ENCODE measurements at regions of chr3 and their contacts with region 1.

Region 1: DNA sequence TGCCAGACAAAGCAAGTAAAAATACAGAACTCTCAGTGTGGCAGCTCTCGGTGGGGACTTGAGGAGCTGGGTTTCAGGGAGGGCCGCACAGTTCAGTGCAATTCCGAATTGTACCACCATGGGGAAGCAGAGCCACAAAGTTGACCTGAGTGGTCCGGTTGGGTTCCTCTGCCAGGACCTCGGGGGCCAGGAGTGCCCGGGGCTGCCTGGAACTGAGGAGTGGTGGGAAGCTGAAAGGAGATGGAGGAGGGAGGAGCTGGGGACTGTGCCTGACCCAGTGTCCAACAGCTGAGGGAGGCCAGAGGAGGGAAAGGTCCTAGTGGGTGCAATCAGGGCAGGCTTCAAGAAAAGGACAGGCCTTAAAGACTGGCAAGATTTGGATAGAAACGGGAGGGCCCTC is 32.2 kb upstream of the TRH start:
- DNase-seq: no peak
- H3K4me3 ChIP-seq: no peak overlapping the region
- H3K27me3 ChIP-seq: peaks cover 3% of the 10 kb centered on the region
- CTCF ChIP-seq: peak; percentile 80

Region 2: DNA sequence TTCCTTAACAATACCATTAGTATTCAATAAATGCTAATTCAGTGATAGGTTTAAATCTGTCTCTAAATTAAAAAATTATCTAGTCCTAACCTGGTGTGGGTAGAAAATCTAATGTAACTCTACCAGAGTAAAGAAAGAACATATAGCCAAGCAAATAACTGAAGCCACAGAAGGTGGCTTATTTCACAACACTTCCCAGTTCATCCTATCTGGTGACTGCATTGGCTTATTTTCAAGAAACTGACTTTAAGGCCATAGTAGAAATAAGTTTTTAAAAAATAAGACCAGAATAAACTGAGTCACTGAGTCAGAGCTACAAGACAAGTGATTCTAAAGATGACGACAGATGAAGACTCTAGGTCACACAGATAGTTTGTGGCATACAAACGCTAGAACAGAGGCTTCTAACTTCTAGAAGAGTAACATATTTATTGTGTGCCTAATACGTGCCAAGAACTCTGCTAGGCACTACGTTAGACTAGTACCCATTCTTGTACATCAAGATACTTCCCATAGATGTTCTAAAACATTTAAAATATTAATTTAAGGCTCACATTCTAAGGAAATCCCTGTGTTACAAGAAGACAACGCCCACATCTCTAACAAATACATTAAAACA is 74.7 kb before region 1 on chr3:
- CTCF ChIA-PET with region 1: no interaction called
- POLR2A ChIA-PET with region 1: no interaction called
- DNase-seq: no peak
- H3K4me3 ChIP-seq: no peak overlapping the region
- H3K27me3 ChIP-seq: no peaks in the 10 kb centered on the region
- CTCF ChIP-seq: no peak

Region 3: GRCh38 chr3:129927072-129927471 is 15.2 kb before region 1 on chr3:
- CTCF ChIA-PET with region 1: interaction called, 24 read pairs
- POLR2A ChIA-PET with region 1: no interaction called
- DNase-seq: no peak
- H3K4me3 ChIP-seq: no peak overlapping the region
- H3K27me3 ChIP-seq: peaks cover 4% of the 10 kb centered on the region
- CTCF ChIP-seq: no peak

Region 4: DNA sequence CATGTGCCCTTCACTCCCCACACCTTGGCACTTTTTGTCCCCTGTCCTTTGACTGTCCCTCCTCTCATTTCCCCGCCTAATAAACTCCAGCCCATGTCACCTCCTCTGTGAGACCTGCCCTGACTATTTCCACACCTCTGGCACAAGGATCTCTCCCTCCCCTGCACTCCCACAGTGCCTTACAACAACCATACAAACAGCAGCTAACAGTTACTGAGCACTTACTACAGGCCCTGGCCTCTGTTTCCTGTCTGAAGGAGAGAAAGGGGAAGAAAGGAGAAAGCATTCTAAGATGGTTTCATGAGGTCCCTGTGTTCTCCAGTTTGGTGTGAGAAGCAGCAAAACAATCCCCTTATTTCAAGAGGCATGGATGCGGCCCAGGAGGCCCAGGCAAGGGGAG is 12.2 kb after region 1 on chr3:
- CTCF ChIA-PET with region 1: interaction called, 22 read pairs
- POLR2A ChIA-PET with region 1: no interaction called
- DNase-seq: no peak
- H3K4me3 ChIP-seq: no peak overlapping the region
- H3K27me3 ChIP-seq: peaks cover 13% of the 10 kb centered on the region
- CTCF ChIP-seq: no peak

Region 5: DNA sequence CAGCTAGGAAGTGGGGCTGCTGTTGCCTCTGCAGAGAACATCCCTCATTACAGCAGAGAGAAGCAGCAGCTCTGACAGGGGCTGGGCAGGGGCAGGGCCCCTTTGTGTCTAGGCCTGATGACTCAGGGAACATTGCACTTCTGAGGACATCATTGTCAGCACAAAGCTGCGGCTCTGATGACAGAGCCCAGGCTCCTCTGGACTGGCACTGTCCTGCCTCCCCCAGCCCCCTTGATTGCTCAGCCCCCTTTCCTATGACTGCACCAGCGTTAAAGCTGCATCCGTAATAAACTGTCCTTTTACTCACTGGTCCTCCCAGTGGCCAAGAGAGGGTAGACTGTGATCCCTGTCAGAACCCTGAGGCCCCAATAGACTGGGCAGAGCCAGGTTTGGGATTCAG is 50.5 kb after region 1 on chr3:
- CTCF ChIA-PET with region 1: interaction called, 11 read pairs
- POLR2A ChIA-PET with region 1: no interaction called
- DNase-seq: no peak
- H3K4me3 ChIP-seq: no peak overlapping the region
- H3K27me3 ChIP-seq: peaks cover 4% of the 10 kb centered on the region; the same call in 1 of the 2 replicates
- CTCF ChIP-seq: peak; percentile 54

Region 6: DNA sequence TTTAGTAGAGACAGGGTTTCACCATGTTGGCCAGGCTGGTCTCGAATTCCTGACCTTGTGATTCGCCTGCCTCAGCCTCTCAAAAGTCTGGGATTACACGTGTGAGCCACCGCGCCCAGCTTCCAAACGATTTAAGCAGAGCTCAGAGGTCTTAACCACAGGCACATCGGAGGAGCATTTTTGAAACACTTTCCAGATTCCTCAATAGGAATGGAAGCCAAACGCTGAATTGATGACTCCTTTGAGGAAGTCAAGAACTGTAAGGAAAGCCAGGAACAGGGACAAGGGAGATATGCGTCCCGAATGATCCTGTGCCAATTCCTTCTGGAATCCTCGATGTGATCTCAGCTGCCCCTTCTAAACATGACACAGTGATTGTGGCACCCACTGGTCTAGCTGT is 72.2 kb after region 1 on chr3:
- CTCF ChIA-PET with region 1: interaction called, 14 read pairs
- POLR2A ChIA-PET with region 1: no interaction called
- DNase-seq: peak; percentile 17
- H3K4me3 ChIP-seq: no peak overlapping the region
- H3K27me3 ChIP-seq: no peaks in the 10 kb centered on the region
- CTCF ChIP-seq: no peak

Region 7: GRCh38 chr3:130093741-130094391 is 151.6 kb after region 1 on chr3:
- CTCF ChIA-PET with region 1: interaction called, 175 read pairs
- POLR2A ChIA-PET with region 1: no interaction called
- DNase-seq: no peak
- H3K4me3 ChIP-seq: no peak overlapping the region
- H3K27me3 ChIP-seq: no peaks in the 10 kb centered on the region
- CTCF ChIP-seq: no peak

Region 8: DNA sequence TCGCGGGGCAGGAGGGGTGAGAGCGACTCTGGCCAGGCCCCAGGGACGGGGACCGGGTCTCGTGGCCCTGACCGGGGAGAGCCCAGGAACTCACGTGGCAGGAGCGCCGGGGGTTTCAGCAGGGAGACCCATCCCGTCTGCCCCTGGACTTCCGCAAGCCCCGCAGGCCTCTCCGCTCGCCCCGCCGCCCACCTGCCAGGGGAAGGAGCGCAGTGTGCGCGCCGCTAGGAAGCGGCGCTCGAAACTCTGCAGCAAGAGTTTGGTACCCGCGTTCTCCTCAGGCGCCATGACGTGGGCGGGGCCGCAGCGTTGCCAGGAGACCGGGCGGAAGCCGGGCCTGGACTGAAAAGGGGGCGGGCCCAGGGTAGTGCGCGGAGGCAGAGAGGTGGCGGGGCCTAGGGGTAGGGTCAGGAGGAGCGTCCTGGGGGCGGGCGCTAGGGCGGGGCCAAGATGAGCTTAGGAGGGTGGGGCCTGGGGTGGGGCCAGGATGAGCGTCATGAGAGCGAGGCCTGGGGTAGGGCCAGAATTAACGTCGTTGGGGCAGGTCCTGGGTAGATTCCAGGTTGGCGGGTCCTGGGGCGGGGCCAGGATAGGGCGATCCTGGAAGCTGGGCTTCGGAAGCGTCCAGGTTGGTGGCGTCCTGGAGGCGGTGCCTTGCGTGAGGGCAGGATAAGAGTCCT is 169.0 kb after region 1 on chr3:
- CTCF ChIA-PET with region 1: interaction called, 88 read pairs
- POLR2A ChIA-PET with region 1: interaction called, 5 read pairs
- DNase-seq: peak; percentile 94
- H3K4me3 ChIP-seq: peak overlapping the region; percentile 80
- H3K27me3 ChIP-seq: no peaks in the 10 kb centered on the region
- CTCF ChIP-seq: no peak